GM23248 (cell line): ENCODE measurements at regions of chr5 and their contacts with region 1.

Region 1: DNA sequence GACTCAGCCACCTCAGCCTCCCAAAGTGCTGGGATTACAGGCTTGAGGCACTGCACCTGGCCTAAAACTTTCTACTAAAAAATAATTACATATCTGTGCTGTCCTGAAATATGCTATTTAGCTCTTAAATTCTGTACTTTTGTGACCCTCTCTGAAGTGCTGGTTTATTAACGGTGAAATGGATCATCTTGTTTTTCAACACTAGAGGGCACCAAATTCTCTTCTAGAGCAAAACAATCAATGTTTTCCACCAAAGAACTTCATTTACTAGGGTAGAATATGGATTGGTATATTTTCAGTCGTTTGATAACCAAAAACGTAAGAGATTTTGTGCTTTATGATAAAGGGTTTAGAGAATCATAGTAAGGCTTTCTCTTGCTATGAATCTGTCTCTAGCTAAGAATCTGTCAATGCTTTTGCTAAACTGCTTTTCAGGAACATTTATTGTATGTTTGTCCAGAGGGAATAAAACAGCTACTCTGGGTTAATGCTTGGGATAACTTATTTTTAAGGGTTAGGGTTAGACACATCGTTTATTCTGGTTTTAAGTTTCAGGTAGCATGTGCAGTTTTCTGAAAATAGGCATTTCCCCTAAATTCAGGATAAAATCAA is 63.6 kb downstream of the RNF180 start:
- DNase-seq: peak; percentile 59
- H3K4me3 ChIP-seq: no peak overlapping the region
- H3K27ac ChIP-seq: no peak overlapping the region
- H3K4me1 ChIP-seq: no peaks in the 10 kb centered on the region
- H3K27me3 ChIP-seq: no peaks in the 10 kb centered on the region

Region 2: GRCh38 chr5:64612344-64612961 is 383.2 kb after region 1 on chr5:
- in situ Hi-C with region 1: loop called (anchors 10 kb)
- DNase-seq: peak; percentile 71
- H3K4me3 ChIP-seq: no peak overlapping the region
- H3K27ac ChIP-seq: no peak overlapping the region
- H3K4me1 ChIP-seq: no peaks in the 10 kb centered on the region
- H3K27me3 ChIP-seq: peaks cover 30% of the 10 kb centered on the region